ENCODE measurements at regions of chr5 and their contacts with region 1.

Region 1: DNA sequence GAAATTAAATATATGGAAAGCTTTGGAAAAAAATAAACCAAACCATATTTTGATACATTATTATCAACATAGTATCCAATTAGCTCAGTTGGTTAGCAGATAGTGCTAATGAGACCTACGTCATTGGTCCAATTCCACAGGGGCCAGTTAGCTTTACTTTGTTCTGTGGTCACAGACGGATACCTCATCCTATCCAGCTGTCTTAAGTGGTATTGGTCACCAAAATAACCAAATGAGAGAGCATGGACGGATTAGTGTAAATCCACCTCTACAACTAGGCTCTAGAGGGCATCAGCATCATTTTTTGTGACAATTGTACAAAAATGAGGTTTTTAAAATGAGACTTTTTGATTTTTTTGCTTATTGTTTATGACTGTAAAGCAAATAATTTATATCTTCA is 364.2 kb downstream of the KIAA0825 start:
- DNase-seq: no peak

Region 2: GRCh38 chr5:94266170-94266569 is 12.0 kb after region 1 on chr5:
- intact Hi-C with region 1: loop called in 1 of 2 experiments (anchors 1 kb)
- DNase-seq: no peak